Adrenal gland (tissue), 19 donors: ENCODE measurements at regions of chr3 and their contacts with region 1.

Region 1: GRCh38 chr3:116757315-116757714 is 47.7 kb downstream of the TUSC7 start:
- DNase-seq: no peak
- H3K4me3 ChIP-seq: no peak overlapping the region
- H3K27ac ChIP-seq: no peak overlapping the region
- H3K4me1 ChIP-seq: peaks cover 0 to 3% of the 10 kb centered on the region in 2 donors
- H3K27me3 ChIP-seq: no peaks in the 10 kb centered on the region
- CTCF ChIP-seq: no peak
- POLR2A ChIP-seq: no peak

Region 2: GRCh38 chr3:116135457-116136085 is 621.7 kb before region 1 on chr3:
- intact Hi-C with region 1: loop called in 1 of 2 experiments (anchors 10 kb)
- DNase-seq: peak; percentile 15 to 91 (median 29)
- H3K4me3 ChIP-seq: no peak overlapping the region
- H3K27ac ChIP-seq: peak overlapping the region in 1 of 5 donors; percentile 28
- H3K4me1 ChIP-seq: peaks cover 0 to 7% of the 10 kb centered on the region in 2 donors
- H3K27me3 ChIP-seq: no peaks in the 10 kb centered on the region
- CTCF ChIP-seq: no peak
- POLR2A ChIP-seq: no peak

Region 3: DNA sequence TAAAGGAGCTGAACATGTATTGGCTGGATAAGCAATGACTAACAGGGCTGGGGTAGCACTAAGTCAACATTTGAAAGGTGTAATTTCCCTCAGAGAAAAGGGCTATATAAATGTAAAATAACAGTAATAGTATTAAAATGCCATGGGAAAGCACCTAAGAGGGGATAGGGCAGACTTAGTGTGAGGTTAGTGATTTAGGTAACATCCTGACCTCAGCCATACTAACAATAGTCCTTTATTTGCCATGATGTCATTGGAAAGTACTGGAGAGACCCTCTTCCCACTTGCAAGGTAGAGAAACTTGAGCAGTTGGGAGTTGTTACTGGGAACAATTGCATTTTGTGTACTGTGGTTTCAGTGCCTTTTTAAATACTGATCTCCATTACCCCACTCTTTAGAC is 415.4 kb before region 1 on chr3:
- intact Hi-C with region 1: no loop called
- DNase-seq: no peak
- H3K4me3 ChIP-seq: no peak overlapping the region
- H3K27ac ChIP-seq: no peak overlapping the region
- H3K4me1 ChIP-seq: no peaks in the 10 kb centered on the region
- H3K27me3 ChIP-seq: no peaks in the 10 kb centered on the region
- CTCF ChIP-seq: no peak
- POLR2A ChIP-seq: no peak

Region 4: DNA sequence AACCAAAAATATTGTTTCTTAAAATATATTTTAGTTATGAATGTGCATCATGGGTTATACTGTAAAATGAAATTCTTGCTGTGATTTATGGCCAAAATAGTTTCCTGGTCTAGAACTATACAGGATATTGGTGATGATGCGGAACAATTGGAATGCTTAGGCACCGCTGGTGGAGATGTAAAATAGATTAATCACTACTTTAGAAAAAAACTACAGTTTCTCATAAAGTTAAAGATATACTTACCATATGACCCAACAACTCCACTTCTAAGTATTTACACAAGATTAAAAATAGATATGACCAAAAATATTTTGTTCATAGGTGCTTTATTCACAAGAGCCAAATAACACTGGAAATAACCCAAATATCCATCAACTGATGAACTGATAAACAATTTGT is 79.0 kb after region 1 on chr3:
- intact Hi-C with region 1: no loop called
- DNase-seq: no peak
- H3K4me3 ChIP-seq: no peak overlapping the region
- H3K27ac ChIP-seq: no peak overlapping the region
- H3K4me1 ChIP-seq: peaks cover 8 to 25% of the 10 kb centered on the region in 2 donors
- H3K27me3 ChIP-seq: no peaks in the 10 kb centered on the region
- CTCF ChIP-seq: no peak
- POLR2A ChIP-seq: no peak